Head of caudate nucleus (tissue), 42 donors: ENCODE measurements at regions of chr2 and their contacts with region 1.

Region 1: DNA sequence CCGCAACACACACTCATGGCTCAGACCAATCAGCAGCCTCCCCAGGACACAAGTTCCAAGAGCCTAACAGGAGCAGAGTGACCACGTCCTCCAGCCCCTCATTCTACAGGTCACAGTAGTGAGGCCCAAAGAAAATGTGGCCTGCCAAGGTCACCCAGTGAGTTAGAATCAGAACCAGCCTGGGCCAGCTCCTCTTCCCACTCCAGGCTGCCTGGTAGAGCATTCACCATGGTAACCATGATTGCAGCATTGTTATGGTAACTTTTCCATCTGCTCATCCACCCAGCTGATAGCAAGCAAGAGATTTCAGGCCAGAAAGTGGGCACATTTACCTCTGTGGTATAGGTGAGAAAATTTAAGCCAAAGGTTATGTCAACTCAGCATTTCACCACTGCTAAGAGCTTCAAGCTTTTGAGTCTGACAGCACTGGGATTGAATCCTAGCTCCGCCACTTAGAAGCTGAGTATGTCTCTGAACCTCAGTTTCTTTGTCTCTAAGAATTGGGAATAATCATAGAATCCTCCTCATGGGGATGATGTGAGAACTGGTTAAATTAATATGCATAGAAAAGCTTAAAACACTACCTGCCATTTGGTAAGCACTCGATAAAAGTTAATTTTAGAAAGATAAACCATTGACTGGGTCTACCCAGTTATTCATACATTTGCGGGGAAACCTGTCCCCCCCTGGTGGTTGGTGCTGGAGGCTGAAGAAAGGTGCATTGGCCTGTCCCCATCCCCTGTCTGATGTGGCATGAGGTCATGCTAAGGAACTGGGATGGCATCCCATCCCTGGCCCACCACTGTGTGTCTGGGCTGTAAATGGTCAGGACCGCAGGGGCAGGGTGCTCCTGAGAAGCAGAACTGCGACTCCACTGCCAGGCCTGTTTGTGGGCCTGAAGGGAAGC is 181.5 kb downstream of the KLHL29 start:
- DNase-seq: peak in 16 of 42 donors; percentile 29 to 71 (median 41)

Region 2: GRCh38 chr2:23384551-23385349 is 181.7 kb before region 1 on chr2 and contains the start of gene KLHL29:
- intact Hi-C with region 1: loop called (anchors 10 kb)
- DNase-seq: peak; percentile 51 to 92 (median 83)

Region 3: DNA sequence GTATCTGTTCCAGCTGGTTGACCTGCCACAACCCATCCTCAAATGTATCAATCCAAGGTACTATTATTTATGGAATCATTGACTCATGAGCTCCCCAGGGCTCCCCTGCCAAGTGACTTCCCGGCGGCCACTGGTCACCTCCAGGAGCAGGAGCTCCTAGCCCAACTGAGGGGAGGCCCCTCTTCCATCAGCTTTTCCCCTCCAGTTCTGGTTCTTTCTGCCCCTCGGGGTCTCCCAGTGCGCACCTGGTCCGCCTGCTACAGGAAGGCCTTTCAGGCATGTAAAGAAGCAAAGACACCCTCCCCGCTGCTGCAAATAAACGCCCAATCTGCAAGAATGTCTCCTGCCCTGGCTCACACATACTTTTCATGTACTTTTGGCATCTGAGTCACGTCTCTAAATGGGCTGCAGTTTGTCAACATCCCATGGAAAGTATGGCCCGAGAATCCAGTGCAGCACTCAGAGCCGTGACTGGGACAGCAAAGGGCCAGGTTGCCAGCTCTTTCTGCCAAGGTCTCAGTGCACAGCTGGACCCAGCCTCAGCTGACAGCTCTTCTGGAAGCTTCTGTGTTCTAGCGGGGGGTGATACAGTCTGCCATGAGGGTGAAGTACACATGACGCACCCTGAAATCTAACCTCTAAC is 140.1 kb before region 1 on chr2:
- intact Hi-C with region 1: no loop called
- DNase-seq: peak in 3 of 42 donors; percentile 8 to 33 (median 13)

Region 4: DNA sequence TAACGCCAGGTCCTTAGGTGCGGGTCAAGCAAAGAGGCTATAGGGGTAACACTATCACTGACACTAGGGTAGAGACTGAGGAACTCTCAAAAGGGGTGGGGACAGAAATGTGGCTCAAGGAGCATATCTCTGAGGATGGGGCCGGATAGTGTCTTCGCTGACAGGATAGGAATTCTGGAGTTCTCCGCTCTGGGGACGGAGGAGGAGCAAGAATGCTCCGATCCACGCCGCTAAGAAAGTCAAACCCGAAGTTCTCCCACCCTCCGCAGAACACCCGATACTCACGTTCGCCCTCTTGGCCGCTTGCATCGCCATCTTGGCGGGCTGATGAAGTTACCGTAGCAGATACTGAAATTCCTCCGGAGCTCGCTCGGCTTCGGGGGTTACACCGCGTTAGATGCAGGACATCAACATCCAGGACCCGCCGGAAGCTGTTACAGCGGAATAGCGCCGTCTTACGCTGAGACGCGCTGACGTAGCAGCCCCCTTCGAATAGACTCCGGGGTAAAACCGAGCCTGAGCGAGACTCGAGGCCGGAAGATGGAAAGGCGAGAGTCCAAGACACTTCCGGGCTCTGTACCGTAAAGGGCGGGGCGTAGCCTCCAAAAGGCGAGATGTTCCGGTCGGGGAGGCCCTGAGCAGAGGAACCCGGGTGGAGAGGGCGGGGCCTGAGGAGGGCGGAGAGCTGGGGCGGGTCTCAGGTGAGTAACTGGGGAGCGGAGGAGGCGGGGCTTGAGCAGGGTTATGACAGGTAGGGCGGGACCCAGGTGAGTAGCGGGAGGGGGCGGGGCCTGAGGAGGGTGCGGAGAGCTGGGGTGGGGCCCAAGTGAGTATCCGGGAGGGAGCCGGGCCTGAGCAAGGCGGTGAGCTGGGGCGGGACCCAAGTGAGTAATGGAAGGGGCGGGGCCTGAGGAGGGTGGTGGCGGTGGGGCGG is 509.7 kb after region 1 on chr2 and contains the start of gene SF3B6:
- intact Hi-C with region 1: no loop called
- DNase-seq: peak; percentile 92 to 99 (median 97)